Caco-2 (cell line): ENCODE measurements at regions of chr2 and their contacts with region 1.

Region 1: GRCh38 chr2:183124222-183124956 is at the start of gene NUP35:
- DNase-seq: peak; percentile 91 to 92
- H3K4me3 ChIP-seq: peak within 1 kb of the TSS; percentile 73
- H3K4me3 Mint-ChIP-seq: peak within 1 kb of the TSS; percentile 96
- H3K27ac Mint-ChIP-seq: peak within 1 kb of the TSS; percentile 98
- H3K4me1 ChIP-seq: 0 out of 2 replicates have a peak, but pooled peaks cover 5% of the 10 kb centered on the region
- H3K4me1 Mint-ChIP-seq: peaks cover 14% of the 10 kb centered on the region
- H3K27me3 ChIP-seq: no peaks in the 10 kb centered on the region
- H3K27me3 Mint-ChIP-seq: no peaks in the 10 kb centered on the region
- CTCF ChIP-seq: no peak
- total RNA-seq, gene NUP35: 34.7 and 36.1 TPM in 2 replicates

Region 2: GRCh38 chr2:182933629-182934028 is 190.8 kb before region 1 on chr2:
- CTCF ChIA-PET with region 1: no interaction called
- POLR2A ChIA-PET with region 1: no interaction called
- intact Hi-C with region 1: no loop called
- DNase-seq: no peak
- H3K4me3 ChIP-seq: no peak overlapping the region
- H3K4me3 Mint-ChIP-seq: no peak overlapping the region
- H3K27ac Mint-ChIP-seq: no peak overlapping the region
- H3K4me1 ChIP-seq: no peaks in the 10 kb centered on the region
- H3K4me1 Mint-ChIP-seq: peaks cover 7% of the 10 kb centered on the region
- H3K27me3 ChIP-seq: no peaks in the 10 kb centered on the region
- H3K27me3 Mint-ChIP-seq: no peaks in the 10 kb centered on the region
- CTCF ChIP-seq: no peak

Region 3: GRCh38 chr2:183057333-183057985 is 66.9 kb before region 1 on chr2:
- CTCF ChIA-PET with region 1: no interaction called
- POLR2A ChIA-PET with region 1: no interaction called
- intact Hi-C with region 1: loop called (anchors 1 kb)
- DNase-seq: no peak
- H3K4me3 ChIP-seq: no peak overlapping the region
- H3K4me3 Mint-ChIP-seq: no peak overlapping the region
- H3K27ac Mint-ChIP-seq: no peak overlapping the region
- H3K4me1 ChIP-seq: peaks cover 42% of the 10 kb centered on the region
- H3K4me1 Mint-ChIP-seq: peaks cover 18% of the 10 kb centered on the region
- H3K27me3 ChIP-seq: no peaks in the 10 kb centered on the region
- H3K27me3 Mint-ChIP-seq: no peaks in the 10 kb centered on the region
- CTCF ChIP-seq: no peak

Region 4: DNA sequence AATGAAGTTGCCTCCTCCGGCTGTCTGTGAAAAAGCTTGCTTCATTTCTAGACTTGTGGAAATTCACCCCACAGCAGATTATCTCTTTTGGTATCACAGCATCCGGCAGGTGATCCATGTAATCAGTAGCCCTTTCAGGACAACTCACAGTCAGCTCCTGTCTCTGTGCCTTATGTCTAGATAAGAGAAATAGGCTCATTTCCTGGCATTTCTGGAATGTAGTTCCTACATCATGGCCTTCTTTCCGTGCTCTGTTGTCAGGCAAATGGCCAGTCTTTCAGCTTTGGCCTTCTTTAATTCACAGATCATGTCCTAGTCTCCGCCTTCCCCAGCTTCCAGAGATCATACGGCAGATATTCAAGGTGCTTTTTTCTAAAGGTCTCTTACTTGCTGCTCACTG is 455.3 kb after region 1 on chr2:
- CTCF ChIA-PET with region 1: no interaction called
- POLR2A ChIA-PET with region 1: no interaction called
- intact Hi-C with region 1: no loop called
- DNase-seq: no peak
- H3K4me3 ChIP-seq: no peak overlapping the region
- H3K4me3 Mint-ChIP-seq: no peak overlapping the region
- H3K27ac Mint-ChIP-seq: no peak overlapping the region
- H3K4me1 ChIP-seq: no peaks in the 10 kb centered on the region; the same call in none of the 2 replicates
- H3K4me1 Mint-ChIP-seq: no peaks in the 10 kb centered on the region
- H3K27me3 ChIP-seq: no peaks in the 10 kb centered on the region
- H3K27me3 Mint-ChIP-seq: no peaks in the 10 kb centered on the region
- CTCF ChIP-seq: no peak

Region 5: DNA sequence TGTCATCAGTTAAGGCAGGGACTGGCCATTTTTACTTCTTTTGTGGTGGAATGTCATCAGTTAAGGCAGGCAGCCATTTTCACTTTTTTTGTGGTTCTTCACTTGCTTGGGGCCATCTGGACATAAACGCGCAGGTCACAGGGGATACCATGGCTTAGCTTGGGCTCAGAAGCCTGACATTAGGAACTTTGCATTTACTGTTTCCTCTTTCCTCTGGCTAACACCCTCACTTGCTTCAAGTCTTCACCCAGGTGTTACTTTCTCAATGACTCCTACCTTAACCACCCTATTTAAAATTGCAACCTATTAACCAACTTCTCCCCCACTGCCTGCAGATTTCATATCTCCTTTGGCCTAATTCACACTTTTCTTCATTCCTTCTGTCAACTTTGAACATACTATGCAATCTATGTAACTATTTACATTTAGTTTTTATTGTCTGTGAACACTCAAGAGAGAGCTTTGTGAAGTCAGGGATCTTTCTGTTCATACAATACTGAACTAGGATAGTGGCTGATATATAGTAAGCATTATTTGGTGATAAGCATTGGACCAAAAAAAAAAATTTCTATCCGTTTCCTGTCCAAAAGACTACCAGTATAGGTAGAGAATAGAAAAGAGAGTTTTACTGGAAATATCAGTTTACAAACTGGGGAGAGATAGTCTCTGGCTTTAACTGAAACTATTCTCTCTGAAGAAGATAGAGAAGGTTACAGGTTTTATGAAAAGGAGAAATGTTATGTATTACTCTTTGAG is 873.8 kb after region 1 on chr2:
- CTCF ChIA-PET with region 1: no interaction called
- POLR2A ChIA-PET with region 1: no interaction called
- intact Hi-C with region 1: no loop called
- DNase-seq: no peak
- H3K4me3 ChIP-seq: no peak overlapping the region
- H3K4me3 Mint-ChIP-seq: no peak overlapping the region
- H3K27ac Mint-ChIP-seq: no peak overlapping the region
- H3K4me1 ChIP-seq: 0 out of 2 replicates have a peak, but pooled peaks cover 4% of the 10 kb centered on the region
- H3K4me1 Mint-ChIP-seq: no peaks in the 10 kb centered on the region
- H3K27me3 ChIP-seq: no peaks in the 10 kb centered on the region
- H3K27me3 Mint-ChIP-seq: no peaks in the 10 kb centered on the region
- CTCF ChIP-seq: no peak